ENCODE measurements at regions of chr1 and their contacts with region 1.

Region 1: GRCh38 chr1:25858906-25859789 is at the start of gene AUNIP:
- DNase-seq: peak; percentile 98
- H3K4me3 Mint-ChIP-seq: peak within 1 kb of the TSS; percentile 97
- H3K27ac Mint-ChIP-seq: peak within 1 kb of the TSS; percentile 96
- H3K4me1 Mint-ChIP-seq: peaks cover 27% of the 10 kb centered on the region
- H3K27me3 Mint-ChIP-seq: no peaks in the 10 kb centered on the region
- total RNA-seq, gene AUNIP: 12.0 and 13.9 TPM in 2 replicates

Region 2: DNA sequence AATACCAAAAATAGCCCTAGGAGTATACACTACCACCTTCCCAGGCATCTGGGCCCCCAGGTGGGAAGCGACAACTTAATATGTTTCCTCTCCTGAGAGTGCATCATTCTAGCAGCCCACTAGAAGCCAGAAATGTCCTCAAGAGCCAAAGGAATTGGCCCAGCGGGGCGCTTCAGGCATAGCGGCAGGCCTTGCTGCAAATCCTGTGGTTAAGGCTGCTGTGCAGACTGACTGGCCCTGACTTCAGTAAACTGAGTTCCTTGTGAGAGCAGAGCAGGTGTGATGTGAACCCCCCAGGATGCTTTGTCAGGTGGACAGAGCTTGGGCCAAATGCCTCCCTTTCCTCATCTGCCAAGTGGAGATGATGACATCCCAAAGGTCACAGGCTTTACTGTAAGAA is 345.5 kb before region 1 on chr1:
- intact Hi-C with region 1: no loop called
- DNase-seq: no peak
- H3K4me3 Mint-ChIP-seq: no peak overlapping the region
- H3K27ac Mint-ChIP-seq: no peak overlapping the region
- H3K4me1 Mint-ChIP-seq: no peaks in the 10 kb centered on the region
- H3K27me3 Mint-ChIP-seq: peaks cover 5% of the 10 kb centered on the region

Region 3: DNA sequence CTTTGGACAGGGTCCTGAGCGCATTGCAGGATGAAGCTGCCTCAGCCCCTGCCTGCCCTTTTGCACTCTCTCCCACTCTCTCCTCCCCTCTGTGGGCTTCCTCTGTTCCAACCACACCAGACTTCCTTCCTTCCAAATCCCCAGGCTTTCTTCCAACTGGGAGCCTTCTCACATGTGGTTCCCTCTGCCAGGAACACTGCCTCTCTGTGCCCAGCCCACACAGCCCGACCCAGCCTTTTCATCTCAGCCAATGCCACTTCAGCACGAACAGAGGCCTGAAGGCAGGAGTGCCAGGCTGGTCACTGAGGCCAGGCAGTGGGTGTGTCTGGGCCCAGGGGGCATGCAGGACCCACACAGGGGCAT is 53.3 kb before region 1 on chr1:
- intact Hi-C with region 1: no loop called
- DNase-seq: no peak
- H3K4me3 Mint-ChIP-seq: no peak overlapping the region
- H3K27ac Mint-ChIP-seq: no peak overlapping the region
- H3K4me1 Mint-ChIP-seq: peaks cover 16% of the 10 kb centered on the region
- H3K27me3 Mint-ChIP-seq: peaks cover 14% of the 10 kb centered on the region

Region 4: GRCh38 chr1:25819576-25820246 is 39.4 kb before region 1 on chr1 and contains the start of gene MTFR1L:
- intact Hi-C with region 1: loop called (anchors 1 kb)
- DNase-seq: peak; percentile 99
- H3K4me3 Mint-ChIP-seq: peak within 1 kb of the TSS; percentile 96
- H3K27ac Mint-ChIP-seq: peak within 1 kb of the TSS; percentile 92
- H3K4me1 Mint-ChIP-seq: peaks cover 31% of the 10 kb centered on the region
- H3K27me3 Mint-ChIP-seq: no peaks in the 10 kb centered on the region
- total RNA-seq, gene MTFR1L: 30.0 and 31.9 TPM in 2 replicates

Region 5: DNA sequence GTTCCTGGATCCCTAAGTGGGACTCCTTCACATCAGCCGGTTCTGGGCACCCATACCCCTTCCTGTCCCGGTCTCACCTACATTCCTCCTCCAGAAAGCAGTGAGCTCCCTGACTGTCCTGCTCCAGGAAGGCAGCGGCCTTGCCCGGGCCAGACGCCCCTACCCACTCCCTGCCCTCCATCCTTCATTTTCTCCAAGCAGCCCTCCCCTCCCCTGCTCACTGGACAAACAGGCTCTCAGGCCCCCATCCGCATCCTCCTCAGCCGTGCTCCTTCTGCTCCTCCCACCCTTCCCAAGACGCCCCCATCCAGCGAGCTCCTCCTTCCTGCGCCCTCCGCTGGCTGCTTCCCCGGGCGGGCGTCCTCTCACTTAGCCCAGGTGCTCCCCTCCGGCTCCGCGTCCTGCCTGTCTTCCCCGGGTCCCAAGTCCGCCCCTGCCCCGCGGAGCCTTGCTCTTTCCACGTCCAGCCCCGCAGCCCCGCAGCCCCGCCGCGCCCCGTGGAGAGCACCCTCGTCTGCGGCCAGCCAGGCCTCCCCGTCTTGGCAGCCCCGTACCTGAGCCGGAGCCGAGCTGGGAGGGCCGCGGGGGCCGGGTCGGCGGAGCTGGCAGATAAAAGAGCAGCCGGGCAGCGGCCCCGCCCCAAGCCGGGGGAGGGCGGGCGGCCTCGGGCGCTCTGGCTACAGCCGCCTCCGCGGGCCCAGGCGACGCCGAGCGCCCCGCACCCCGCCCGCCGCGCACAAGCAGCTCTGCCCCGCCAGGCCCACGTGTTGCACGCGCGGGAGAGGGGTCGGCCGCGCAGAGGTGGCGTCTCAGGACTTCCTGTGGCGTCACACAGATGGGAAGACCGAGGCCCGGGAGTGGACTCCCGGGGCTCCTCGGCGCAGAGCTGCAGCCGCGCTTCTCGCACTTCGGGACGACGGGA is 16.0 kb after region 1 on chr1 and contains the start of gene PAQR7:
- intact Hi-C with region 1: loop called (anchors 2 kb)
- DNase-seq: peak; percentile 91
- H3K4me3 Mint-ChIP-seq: peak within 1 kb of the TSS; percentile 93
- H3K27ac Mint-ChIP-seq: peak within 1 kb of the TSS; percentile 58
- H3K4me1 Mint-ChIP-seq: peaks cover 5% of the 10 kb centered on the region
- H3K27me3 Mint-ChIP-seq: peaks cover 20% of the 10 kb centered on the region
- total RNA-seq, gene PAQR7: 6.6 and 6.8 TPM in 2 replicates